ENCODE measurements at regions of chr7 and their contacts with region 1.

Region 1: GRCh38 chr7:157813741-157814676 is 477.2 kb downstream of the DNAJB6 start:
- DNase-seq: no peak
- ATAC-seq: no peak
- H3K4me3 ChIP-seq: no peak overlapping the region
- H3K4me3 Mint-ChIP-seq: no peak overlapping the region
- H3K27ac ChIP-seq: no peak overlapping the region
- H3K27ac Mint-ChIP-seq: no peak overlapping the region
- H3K4me1 ChIP-seq: no peaks in the 10 kb centered on the region
- H3K4me1 Mint-ChIP-seq: peaks cover 3% of the 10 kb centered on the region
- H3K27me3 ChIP-seq: no peaks in the 10 kb centered on the region
- H3K27me3 Mint-ChIP-seq: no peaks in the 10 kb centered on the region
- CTCF ChIP-seq: no peak

Region 2: GRCh38 chr7:157834501-157835163 is 20.6 kb after region 1 on chr7:
- CTCF ChIA-PET with region 1: no interaction called
- POLR2A ChIA-PET with region 1: no interaction called
- intact Hi-C with region 1: loop called in 1 of 2 experiments (anchors 1 kb)
- DNase-seq: no peak
- ATAC-seq: no peak
- H3K4me3 ChIP-seq: no peak overlapping the region
- H3K4me3 Mint-ChIP-seq: no peak overlapping the region
- H3K27ac ChIP-seq: no peak overlapping the region
- H3K27ac Mint-ChIP-seq: no peak overlapping the region
- H3K4me1 ChIP-seq: no peaks in the 10 kb centered on the region
- H3K4me1 Mint-ChIP-seq: no peaks in the 10 kb centered on the region
- H3K27me3 ChIP-seq: no peaks in the 10 kb centered on the region
- H3K27me3 Mint-ChIP-seq: no peaks in the 10 kb centered on the region
- CTCF ChIP-seq: no peak